ENCODE measurements at regions of chr15 and their contacts with region 1.

Region 1: GRCh38 chr15:45587095-45587860 is at the start of gene BLOC1S6:
- DNase-seq: peak; percentile 84 to 92
- ATAC-seq: peak; percentile 91
- total RNA-seq, gene BLOC1S6: 24.0 to 25.9 TPM

Region 2: DNA sequence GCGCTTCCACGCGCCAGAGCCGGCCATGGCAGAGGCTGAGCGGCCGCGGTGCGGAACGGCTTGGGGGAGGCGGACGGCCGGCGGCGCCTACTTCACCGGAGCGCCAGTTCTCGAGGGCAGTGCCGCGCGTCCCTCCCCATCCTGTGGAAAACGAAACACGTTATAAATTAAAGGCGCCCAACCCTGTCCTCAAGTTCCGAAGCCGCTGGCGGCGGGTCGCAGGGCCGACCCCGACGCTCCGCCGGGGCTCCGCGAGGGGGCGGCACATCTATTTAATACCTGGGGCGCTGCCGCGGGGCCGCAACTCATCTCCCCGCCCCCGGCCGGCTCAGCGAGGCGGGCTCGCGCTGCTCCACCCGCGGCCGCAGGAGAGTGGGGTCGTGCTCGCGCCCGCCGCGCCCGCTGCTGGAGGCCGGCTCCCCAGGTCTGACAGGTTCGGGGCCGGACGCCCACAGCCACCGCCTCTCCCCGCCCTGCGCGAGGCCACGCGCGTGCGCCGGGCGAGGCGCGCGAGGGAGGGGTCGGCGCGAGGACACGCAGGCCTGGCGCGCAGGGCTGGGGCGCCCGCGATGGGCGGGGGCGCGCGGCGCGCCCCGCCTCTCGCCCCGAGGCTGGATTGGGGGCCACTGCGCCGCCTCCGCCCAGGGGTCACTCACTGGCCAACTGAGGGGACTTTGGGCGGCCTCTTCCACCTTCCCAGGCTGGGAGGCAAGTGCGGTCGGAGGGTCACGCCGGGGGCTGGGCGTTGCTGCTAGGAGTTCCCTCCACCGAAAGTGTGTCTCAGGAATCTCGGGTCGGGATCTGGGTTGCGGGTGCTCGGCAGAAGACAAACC is 64.7 kb before region 1 on chr15 and contains the start of gene SLC30A4:
- intact Hi-C with region 1: loop called in 1 of 2 experiments (anchors 2 kb)
- DNase-seq: peak; percentile 64 to 79
- ATAC-seq: peak; percentile 81
- total RNA-seq, gene SLC30A4: 14.5 to 18.3 TPM

Region 3: DNA sequence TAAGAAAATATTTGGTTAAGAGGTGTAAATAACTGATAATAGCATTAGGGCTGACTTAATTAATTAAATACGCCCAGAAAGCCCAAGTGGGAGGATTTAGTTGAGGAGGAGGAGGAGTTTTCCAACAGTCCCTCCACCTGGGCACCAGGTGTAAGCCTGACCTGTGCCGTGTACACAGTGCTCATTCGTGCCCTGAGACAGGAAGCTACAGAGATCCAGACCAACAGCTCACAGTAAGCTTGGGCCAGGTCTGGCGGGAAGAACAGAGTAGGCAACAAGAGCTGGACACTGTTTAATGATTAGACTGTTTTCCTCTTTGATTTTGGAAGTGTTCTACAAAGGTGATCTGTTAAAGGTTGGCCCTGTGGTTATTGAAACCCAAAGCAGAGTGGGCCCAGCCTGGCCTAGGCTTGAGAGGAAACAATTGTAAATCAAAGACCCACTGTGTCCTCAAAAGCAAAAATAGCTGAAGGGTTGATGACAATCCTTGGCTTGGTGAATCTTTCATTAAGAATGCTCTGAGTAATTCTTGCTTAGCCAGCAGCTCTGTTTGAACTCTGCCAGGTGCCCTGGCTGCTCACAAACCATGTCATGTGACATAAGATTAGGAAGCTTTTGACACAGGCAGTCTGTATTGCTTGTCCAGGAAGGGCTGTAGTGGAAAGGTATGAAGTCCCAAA is 61.4 kb after region 1 on chr15:
- intact Hi-C with region 1: no loop called
- DNase-seq: peak in 1 of 2 donors; percentile 63
- ATAC-seq: peak; percentile 50

Region 4: GRCh38 chr15:45660231-45660979 is 73.1 kb after region 1 on chr15:
- intact Hi-C with region 1: no loop called
- DNase-seq: no peak
- ATAC-seq: peak; percentile 6